GM13977 (cell line): ENCODE measurements at regions of chr16 and their contacts with region 1.

Region 1: GRCh38 chr16:87780385-87780989 is 14.7 kb upstream of the KLHDC4 start:
- DNase-seq: peak; percentile 65
- CTCF ChIP-seq: peak; percentile 17

Region 2: GRCh38 chr16:87844120-87844733 is 63.7 kb after region 1 on chr16:
- in situ Hi-C with region 1: loop called (anchors 10 kb)
- DNase-seq: no peak
- CTCF ChIP-seq: no peak

Region 3: GRCh38 chr16:87891764-87892163 is 111.3 kb after region 1 on chr16:
- in situ Hi-C with region 1: no loop called
- DNase-seq: no peak
- CTCF ChIP-seq: no peak